ENCODE measurements at regions of chr19 and their contacts with region 1.

Region 1: GRCh38 chr19:48255376-48256303 is at the start of gene CARD8:
- DNase-seq: peak; percentile 89
- ATAC-seq: peak; percentile 97
- total RNA-seq, gene CARD8: 34.5 TPM

Region 2: DNA sequence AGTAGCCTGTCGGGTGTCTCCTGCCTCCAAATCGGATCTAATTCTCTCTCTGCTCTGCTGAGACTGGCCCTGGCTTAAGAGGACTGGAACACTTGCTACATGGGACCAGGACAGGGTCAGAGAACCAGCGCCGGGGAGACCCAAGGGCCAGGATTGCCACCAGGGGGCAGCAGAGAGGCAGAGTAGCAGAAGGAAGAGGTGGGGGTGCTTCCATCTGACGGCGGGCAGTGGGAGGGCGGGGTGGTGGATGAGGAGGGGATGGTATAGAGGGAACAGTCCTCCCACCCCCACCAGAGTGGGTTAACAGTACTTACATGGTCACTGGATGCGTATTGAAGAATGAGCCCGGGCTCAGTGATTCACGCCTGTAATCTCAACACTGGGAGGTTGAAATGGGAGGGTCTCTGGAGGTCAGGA is 465.2 kb before region 1 on chr19:
- intact Hi-C with region 1: no loop called
- DNase-seq: peak; percentile 89
- ATAC-seq: peak; percentile 69

Region 3: GRCh38 chr19:48110350-48110966 is 145.2 kb before region 1 on chr19 and contains the start of gene PLA2G4C:
- intact Hi-C with region 1: loop called (anchors 5 kb)
- DNase-seq: peak; percentile 96
- ATAC-seq: peak; percentile 93
- total RNA-seq, gene PLA2G4C: 40.8 TPM

Region 4: GRCh38 chr19:48203732-48204628 is 51.7 kb before region 1 on chr19:
- intact Hi-C with region 1: loop called (anchors 10 kb)
- DNase-seq: peak; percentile 96
- ATAC-seq: peak; percentile 100

Region 5: GRCh38 chr19:48221628-48222027 is 34.0 kb before region 1 on chr19:
- intact Hi-C with region 1: no loop called
- DNase-seq: no peak
- ATAC-seq: no peak

Region 6: DNA sequence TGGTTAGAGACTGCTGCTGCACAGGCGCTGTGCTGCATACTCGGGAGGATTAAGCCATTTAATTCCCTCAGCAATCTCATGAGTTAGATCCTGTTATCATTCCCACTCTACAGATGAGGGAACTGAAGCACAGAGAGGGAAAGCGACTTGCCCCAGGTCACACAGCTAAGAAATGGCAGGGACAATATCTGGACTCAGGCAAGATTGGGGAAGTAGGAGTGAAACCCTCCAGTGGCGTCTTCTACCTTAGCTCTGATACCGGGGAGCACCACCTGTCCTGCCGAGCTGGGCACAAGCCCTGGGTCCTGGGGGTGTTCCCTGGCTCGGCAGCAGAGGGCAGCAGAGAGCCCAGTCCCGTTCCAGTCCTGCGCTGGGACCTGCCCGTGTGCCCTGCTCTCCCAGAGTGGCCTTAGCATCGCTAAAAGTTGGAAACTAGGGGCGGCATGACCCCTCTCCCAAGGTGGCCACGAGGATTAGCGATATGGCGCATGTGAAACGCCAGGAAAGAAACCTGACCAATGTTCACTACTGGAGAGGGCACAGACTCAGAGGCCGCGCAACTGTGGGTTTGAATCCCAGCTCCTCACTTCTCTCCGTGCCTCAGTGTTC is 234.1 kb after region 1 on chr19:
- intact Hi-C with region 1: loop called (anchors 10 kb)
- DNase-seq: peak; percentile 87
- ATAC-seq: no peak